ENCODE measurements at regions of chr15 and their contacts with region 1.

Region 1: GRCh38 chr15:50280271-50280670 is 14.7 kb upstream of the HDC start:
- DNase-seq: no peak
- CTCF ChIP-seq: no peak

Region 2: GRCh38 chr15:50302581-50302980 is 22.3 kb after region 1 on chr15:
- CTCF ChIA-PET with region 1: interaction called, 13 read pairs
- POLR2A ChIA-PET with region 1: no interaction called
- DNase-seq: peak; percentile 50
- CTCF ChIP-seq: no peak